ENCODE measurements at regions of chr18 and their contacts with region 1.

Region 1: GRCh38 chr18:60684843-60685513 is 312.4 kb upstream of the MC4R start:
- DNase-seq: no peak
- ATAC-seq: no peak
- H3K4me3 ChIP-seq: no peak overlapping the region
- H3K27ac ChIP-seq: no peak overlapping the region
- H3K4me1 ChIP-seq: peaks cover 0 to 4% (median 0%) of the 10 kb centered on the region in 9 donors
- H3K27me3 ChIP-seq: peaks cover 0 to 3% (median 0%) of the 10 kb centered on the region in 7 donors
- CTCF ChIP-seq: peak; percentile 40 to 78 (median 71)

Region 2: DNA sequence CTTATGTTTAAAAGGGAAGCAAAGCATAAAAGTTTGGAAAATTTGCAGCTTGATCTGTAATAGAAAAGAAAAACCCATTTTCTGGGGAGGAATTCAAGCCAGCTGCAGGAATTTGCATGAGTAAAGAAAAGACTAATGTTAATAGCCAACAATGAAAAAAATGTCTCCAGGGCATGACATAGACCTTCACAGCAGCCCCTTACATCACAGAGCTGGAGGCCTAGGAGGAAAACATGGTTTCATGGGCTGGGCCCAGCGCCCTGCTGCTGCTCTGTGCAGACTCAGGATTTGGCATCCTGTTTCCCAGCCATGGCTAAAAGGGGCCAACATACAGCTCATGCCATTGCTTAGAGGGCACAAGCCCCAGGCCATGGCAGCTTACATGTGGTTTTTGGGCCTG is 99.2 kb after region 1 on chr18:
- intact Hi-C with region 1: no loop called
- DNase-seq: no peak
- ATAC-seq: no peak
- H3K4me3 ChIP-seq: no peak overlapping the region
- H3K27ac ChIP-seq: no peak overlapping the region
- H3K4me1 ChIP-seq: no peaks in the 10 kb centered on the region
- H3K27me3 ChIP-seq: no peaks in the 10 kb centered on the region
- CTCF ChIP-seq: no peak

Region 3: DNA sequence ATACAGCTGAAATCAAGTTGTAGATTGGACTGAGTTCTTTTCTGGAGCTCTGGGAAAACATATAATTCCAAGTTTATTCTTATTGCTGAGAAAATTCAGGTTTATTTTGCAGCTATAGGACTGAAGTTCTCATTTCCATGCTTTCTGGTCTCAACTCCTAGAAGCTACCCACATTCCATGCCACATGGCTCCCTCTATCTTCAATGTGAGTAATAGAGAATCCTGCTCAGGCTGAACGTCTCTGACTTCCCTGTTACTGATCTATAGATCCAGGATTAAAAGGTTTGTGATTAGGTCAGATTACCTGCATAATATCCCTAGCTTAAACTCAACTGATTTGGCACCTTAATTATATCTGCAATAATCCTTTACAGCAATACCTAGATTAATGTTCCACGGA is 141.4 kb after region 1 on chr18:
- intact Hi-C with region 1: loop called in 3 of 10 experiments (anchors 10 kb)
- DNase-seq: no peak
- ATAC-seq: no peak
- H3K4me3 ChIP-seq: no peak overlapping the region
- H3K27ac ChIP-seq: no peak overlapping the region
- H3K4me1 ChIP-seq: no peaks in the 10 kb centered on the region
- H3K27me3 ChIP-seq: no peaks in the 10 kb centered on the region
- CTCF ChIP-seq: peak in 3 of 9 donors; percentile 14 to 24 (median 18)

Region 4: GRCh38 chr18:61085761-61086160 is 400.8 kb after region 1 on chr18:
- intact Hi-C with region 1: loop called in 1 of 10 experiments (anchors 10 kb)
- DNase-seq: no peak
- ATAC-seq: no peak
- H3K4me3 ChIP-seq: no peak overlapping the region
- H3K27ac ChIP-seq: no peak overlapping the region
- H3K4me1 ChIP-seq: no peaks in the 10 kb centered on the region
- H3K27me3 ChIP-seq: no peaks in the 10 kb centered on the region
- CTCF ChIP-seq: no peak